AG04450 (cell line): ENCODE measurements at regions of chr12 and their contacts with region 1.

Region 1: GRCh38 chr12:112456029-112456428 is 37.3 kb downstream of the PTPN11 start:
- DNase-seq: no peak
- H3K4me3 ChIP-seq: no peak overlapping the region
- H3K27ac ChIP-seq: no peak overlapping the region
- H3K27me3 ChIP-seq: no peaks in the 10 kb centered on the region
- CTCF ChIP-seq: no peak

Region 2: DNA sequence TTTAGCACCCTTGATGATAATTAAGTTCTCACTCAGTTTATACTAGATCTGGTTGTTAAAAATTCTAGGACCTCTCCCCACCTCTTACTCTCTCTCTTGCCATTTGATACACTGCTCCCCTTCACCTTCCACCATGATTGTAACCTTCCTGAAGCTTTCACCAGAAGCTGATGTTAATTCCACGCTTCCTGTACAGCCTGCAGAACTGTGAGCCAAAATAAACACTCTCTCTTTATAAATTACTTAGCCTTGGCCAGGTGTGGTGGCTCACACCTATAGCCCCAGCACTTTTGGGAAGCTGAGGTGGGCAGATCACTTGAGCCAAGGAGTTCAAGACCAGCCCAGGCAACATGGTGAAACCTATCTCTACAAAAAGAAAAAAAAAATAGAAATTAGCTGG is 62.7 kb before region 1 on chr12:
- CTCF ChIA-PET with region 1: no interaction called
- POLR2A ChIA-PET with region 1: no interaction called
- DNase-seq: no peak
- H3K4me3 ChIP-seq: no peak overlapping the region
- H3K27ac ChIP-seq: no peak overlapping the region
- H3K27me3 ChIP-seq: peaks cover 4% of the 10 kb centered on the region
- CTCF ChIP-seq: no peak

Region 3: GRCh38 chr12:112409064-112409905 is 46.7 kb before region 1 on chr12 and contains the start of gene RPL6:
- CTCF ChIA-PET with region 1: no interaction called
- POLR2A ChIA-PET with region 1: no interaction called
- DNase-seq: peak; percentile 80
- H3K4me3 ChIP-seq: peak within 1 kb of the TSS; percentile 93
- H3K27ac ChIP-seq: peak within 1 kb of the TSS; percentile 92
- H3K27me3 ChIP-seq: no peaks in the 10 kb centered on the region
- CTCF ChIP-seq: no peak
- polyA plus RNA-seq, gene RPL6: 2,254 and 2,667 TPM in 2 replicates

Region 4: DNA sequence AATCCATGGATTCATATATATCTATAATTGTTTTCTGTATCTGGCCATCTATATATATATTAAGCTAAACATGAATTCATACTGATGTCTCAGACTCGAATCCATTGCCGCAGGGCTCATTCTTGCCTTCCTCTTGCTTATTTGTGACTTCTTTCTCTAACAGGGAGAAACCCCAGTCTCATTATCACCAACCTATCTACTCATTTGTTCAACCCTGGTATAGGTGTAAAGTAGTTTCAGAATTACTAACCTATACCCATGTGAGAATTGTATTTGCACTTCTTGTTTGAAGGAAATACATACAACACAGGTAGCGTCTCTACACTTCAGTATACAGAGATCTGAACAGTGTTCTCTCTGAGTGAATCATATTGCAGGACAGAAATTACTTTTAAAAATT is 40.5 kb after region 1 on chr12:
- CTCF ChIA-PET with region 1: interaction called, 16 read pairs
- POLR2A ChIA-PET with region 1: no interaction called
- DNase-seq: no peak
- H3K4me3 ChIP-seq: no peak overlapping the region
- H3K27ac ChIP-seq: no peak overlapping the region
- H3K27me3 ChIP-seq: no peaks in the 10 kb centered on the region
- CTCF ChIP-seq: no peak